GM10248 (cell line): ENCODE measurements at regions of chr7 and their contacts with region 1.

Region 1: GRCh38 chr7:141737834-141738591 is at the start of gene SSBP1:
- DNase-seq: peak; percentile 86
- CTCF ChIP-seq: peak; percentile 77

Region 2: GRCh38 chr7:141688043-141688442 is 50.0 kb before region 1 on chr7:
- CTCF ChIA-PET with region 1: interaction called, 12 read pairs
- POLR2A ChIA-PET with region 1: no interaction called
- DNase-seq: no peak
- CTCF ChIP-seq: no peak

Region 3: DNA sequence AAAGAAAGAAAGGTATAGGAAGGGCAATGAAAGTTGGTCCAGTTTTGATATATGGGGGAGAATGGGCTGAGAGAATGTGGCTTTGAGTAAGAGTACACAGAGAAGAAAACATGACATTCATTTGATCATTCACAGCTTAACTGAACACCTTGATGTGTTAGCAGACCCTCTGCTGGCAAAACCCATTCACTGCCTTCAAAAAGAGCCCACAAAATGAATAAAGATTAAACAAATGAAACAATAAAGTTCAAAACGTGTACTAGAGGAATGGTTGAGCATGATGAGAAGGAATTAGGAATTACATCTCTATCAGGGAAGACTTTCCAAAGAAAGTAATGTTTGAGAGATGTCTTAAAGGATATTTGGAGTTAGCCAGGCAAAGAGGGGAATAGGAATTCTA is 27.7 kb before region 1 on chr7:
- CTCF ChIA-PET with region 1: interaction called, 10 read pairs
- POLR2A ChIA-PET with region 1: no interaction called
- DNase-seq: no peak
- CTCF ChIP-seq: peak; percentile 28

Region 4: DNA sequence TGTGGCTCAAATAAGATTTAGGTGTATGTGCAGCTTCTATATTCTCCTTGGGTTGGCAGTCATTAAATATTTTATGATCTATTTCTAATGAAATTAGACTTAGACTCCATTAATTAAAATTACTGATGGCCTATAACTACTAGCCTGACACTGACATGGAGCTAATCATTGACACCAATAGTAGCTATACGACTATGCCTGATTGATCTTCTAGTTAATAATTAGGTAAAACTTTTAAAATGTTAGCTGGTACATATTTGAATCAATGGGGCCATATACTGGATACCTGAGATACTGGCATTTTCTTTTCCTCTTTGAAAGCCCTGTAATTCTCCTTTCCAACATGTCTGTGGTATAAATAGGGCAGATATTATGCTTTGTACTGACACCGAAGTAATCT is 15.5 kb before region 1 on chr7:
- CTCF ChIA-PET with region 1: interaction called, 15 read pairs
- POLR2A ChIA-PET with region 1: no interaction called
- DNase-seq: no peak
- CTCF ChIP-seq: no peak

Region 5: DNA sequence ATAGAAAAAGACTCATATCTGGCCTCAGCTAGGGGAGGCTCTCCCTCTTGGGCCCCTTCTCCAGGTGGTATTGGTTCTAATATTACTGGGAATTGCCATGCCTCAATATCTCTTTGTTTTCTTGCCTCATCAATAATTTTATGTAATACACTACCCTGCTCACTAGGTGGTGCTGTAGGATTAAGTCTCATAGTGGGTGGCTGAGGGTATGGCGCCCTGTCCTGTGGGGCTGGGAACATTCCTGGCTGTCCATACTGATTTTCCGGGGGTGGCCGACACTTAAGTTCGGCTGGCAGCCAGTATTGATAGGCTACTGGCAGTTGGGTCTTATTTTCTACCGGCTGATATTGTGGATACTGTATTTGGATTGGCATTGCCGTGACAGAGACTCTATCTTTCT is 16.9 kb after region 1 on chr7:
- CTCF ChIA-PET with region 1: interaction called, 14 read pairs
- POLR2A ChIA-PET with region 1: no interaction called
- DNase-seq: no peak
- CTCF ChIP-seq: peak; percentile 35

Region 6: GRCh38 chr7:141785706-141786552 is 47.9 kb after region 1 on chr7:
- CTCF ChIA-PET with region 1: interaction called, 16 read pairs
- POLR2A ChIA-PET with region 1: no interaction called
- DNase-seq: peak; percentile 62
- CTCF ChIP-seq: peak; percentile 85

Region 7: DNA sequence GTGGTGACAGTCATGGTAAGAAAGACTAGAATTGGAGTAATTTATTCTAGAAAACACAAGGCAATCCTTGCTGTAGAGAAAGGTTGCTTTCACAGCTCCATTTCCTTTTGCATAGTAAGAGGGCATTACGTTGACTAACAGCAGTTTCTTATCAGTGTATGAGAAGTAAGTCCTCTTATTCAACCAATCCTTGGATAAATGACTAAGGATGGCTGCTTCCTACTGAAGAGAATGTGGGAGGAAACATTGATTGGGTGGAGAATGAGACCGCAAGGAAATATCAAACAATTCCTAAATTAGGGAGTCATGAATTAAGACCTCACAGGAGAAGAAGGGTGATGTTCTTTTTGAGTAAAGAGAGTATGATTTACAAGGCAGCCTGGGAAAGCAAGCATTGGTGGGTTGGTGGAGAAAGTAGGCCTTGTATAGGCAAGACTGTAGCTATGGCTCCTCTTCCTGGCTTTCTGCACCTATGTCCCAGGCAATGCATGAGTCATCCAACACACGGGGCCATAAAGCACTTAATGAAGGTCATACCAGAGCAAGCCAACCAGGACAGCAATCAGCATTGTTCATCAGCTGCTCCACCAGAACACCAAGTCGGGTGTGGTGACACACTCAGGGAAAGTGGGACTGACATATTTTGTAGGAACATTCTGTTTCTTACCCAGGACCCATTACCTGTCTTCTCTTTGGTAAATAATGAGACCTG is 263.3 kb after region 1 on chr7:
- CTCF ChIA-PET with region 1: no interaction called
- POLR2A ChIA-PET with region 1: no interaction called
- DNase-seq: no peak
- CTCF ChIP-seq: no peak